ENCODE measurements at regions of chr2 and their contacts with region 1.

Region 1: GRCh38 chr2:198296665-198297308 is 492.4 kb downstream of the PLCL1 start:
- DNase-seq: peak; percentile 53 to 76 (median 60)
- ATAC-seq: peak; percentile 96
- H3K4me3 ChIP-seq: no peak overlapping the region
- H3K27ac ChIP-seq: no peak overlapping the region
- H3K4me1 ChIP-seq: peaks cover 0 to 3% of the 10 kb centered on the region in 2 experiments; a peak in 2 of 5 replicates
- H3K27me3 ChIP-seq: peaks cover 0 to 12% of the 10 kb centered on the region in 2 experiments; a peak in 2 of 5 replicates
- CTCF ChIP-seq: peak; percentile 63 to 70 (median 64)
- EP300 ChIP-seq: no peak
- POLR2A ChIP-seq: no peak
- RAD21 ChIP-seq: peak; percentile 80 to 83

Region 2: DNA sequence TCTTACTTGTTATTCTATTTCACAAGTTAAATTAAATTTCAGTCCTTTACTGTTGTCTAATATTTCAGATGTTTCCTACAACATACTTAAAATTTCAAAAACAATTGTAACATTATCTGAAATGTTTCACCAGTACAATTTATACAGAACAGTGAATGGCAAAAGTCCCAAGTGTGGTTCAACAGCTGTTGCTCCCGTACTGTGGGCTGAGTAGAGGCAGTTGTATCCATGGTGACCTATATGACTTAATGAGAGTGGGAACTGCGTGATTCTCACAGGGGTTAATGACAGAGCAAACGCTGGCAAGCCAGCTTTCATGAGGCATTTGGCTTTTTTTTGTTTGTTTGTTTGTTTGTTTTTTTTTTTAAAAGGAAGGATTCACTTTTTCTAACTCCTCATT is 497.7 kb before region 1 on chr2:
- CTCF ChIA-PET with region 1: interaction called, 10 read pairs
- POLR2A ChIA-PET with region 1: interaction called, 4 read pairs
- in situ Hi-C with region 1: loop called (anchors 10 kb)
- intact Hi-C with region 1: loop called (anchors 1 kb)
- DNase-seq: no peak
- ATAC-seq: no peak
- H3K4me3 ChIP-seq: no peak overlapping the region
- H3K27ac ChIP-seq: no peak overlapping the region
- H3K4me1 ChIP-seq: peaks cover 0 to 13% of the 10 kb centered on the region in 2 experiments; a peak in 3 of 5 replicates
- H3K27me3 ChIP-seq: no peaks in the 10 kb centered on the region
- CTCF ChIP-seq: no peak
- EP300 ChIP-seq: no peak
- POLR2A ChIP-seq: no peak
- RAD21 ChIP-seq: no peak

Region 3: DNA sequence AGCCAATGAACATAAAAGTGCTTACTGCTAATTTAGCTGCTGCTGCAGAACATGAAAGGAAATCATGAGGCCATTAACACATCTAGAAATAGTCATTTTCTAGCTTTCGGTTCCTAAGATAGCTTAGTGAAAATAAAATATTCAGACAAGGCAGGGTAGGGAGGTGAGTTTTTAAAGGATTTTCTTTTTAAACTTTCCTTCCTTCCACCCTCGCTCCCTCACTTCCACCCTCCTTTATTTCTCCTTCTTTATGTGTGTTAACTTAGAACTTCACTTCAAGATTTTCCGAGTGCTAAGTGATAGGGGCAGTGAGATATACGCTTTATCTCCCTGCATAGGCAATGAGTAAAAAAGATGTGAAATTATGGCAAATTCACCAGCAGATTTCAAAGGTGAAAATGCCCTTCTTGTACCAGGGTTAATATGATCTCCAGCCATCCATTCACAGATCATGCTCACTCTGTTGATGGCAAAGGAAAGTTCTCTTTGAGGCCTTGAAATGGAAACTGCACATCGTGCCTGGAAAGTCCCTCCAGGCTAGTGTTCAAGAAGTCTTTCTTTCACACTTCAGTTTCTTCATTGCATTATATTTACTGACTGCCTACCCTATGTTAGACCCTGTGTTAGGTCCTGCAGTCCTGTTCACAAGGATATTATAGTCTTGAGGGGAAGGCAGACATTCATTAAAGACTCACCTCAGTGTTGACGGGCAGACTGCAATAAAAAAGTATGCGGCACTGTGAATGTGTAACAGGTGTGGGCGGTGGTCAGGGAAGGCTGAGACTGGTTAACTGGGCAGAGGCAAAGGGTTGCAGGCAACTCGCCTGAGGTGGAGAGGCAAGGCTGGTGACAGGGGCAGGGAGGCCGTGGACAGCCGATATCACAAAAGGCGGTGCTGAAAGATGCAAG is 291.6 kb before region 1 on chr2:
- CTCF ChIA-PET with region 1: no interaction called
- POLR2A ChIA-PET with region 1: no interaction called
- in situ Hi-C with region 1: no loop called
- intact Hi-C with region 1: no loop called
- DNase-seq: no peak
- ATAC-seq: peak; percentile 68
- H3K4me3 ChIP-seq: no peak overlapping the region
- H3K27ac ChIP-seq: peak overlapping the region; percentile 35; the same call in 2 of the 3 replicates
- H3K4me1 ChIP-seq: peaks cover 0 to 22% of the 10 kb centered on the region in 2 experiments; a peak in 4 of 5 replicates
- H3K27me3 ChIP-seq: no peaks in the 10 kb centered on the region
- CTCF ChIP-seq: no peak
- EP300 ChIP-seq: no peak
- POLR2A ChIP-seq: no peak
- RAD21 ChIP-seq: no peak

Region 4: GRCh38 chr2:198135481-198135934 is 161.3 kb before region 1 on chr2:
- CTCF ChIA-PET with region 1: no interaction called
- POLR2A ChIA-PET with region 1: no interaction called
- in situ Hi-C with region 1: no loop called
- intact Hi-C with region 1: loop called (anchors 10 kb)
- DNase-seq: no peak
- ATAC-seq: no peak
- H3K4me3 ChIP-seq: no peak overlapping the region
- H3K27ac ChIP-seq: no peak overlapping the region
- H3K4me1 ChIP-seq: no peaks in the 10 kb centered on the region; a peak in 2 of 5 replicates
- H3K27me3 ChIP-seq: no peaks in the 10 kb centered on the region
- CTCF ChIP-seq: no peak
- EP300 ChIP-seq: no peak
- POLR2A ChIP-seq: no peak
- RAD21 ChIP-seq: no peak

Measured in K562 (cell line).